B cell (primary cell): ENCODE measurements at regions of chr4 and their contacts with region 1.

Region 1: DNA sequence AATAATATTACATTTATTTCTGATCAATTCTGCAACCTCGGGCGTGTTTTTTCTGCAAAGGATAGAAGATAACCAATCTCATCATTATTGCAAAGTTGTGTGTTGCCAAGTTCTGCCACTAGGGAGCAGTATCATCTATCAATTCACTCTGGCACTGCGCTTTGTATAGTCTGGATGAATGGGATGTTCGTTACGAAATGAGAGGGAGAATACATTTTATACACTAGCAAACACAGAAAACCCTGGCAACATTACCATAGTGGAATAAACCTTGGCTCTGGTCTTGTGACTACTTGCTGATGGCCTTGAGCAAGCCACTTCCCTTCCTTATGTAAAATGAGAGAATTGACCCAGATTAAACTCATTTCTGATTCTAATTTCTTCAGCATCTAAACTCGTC is 97.5 kb upstream of the ZNF518B start:
- DNase-seq: peak; percentile 67
- ATAC-seq: peak; percentile 70
- H3K4me3 ChIP-seq: no peak overlapping the region
- H3K4me3 Mint-ChIP-seq: no peak overlapping the region
- H3K27ac ChIP-seq: no peak overlapping the region
- H3K27ac Mint-ChIP-seq: no peak overlapping the region
- H3K4me1 ChIP-seq: peaks cover 4 to 9% of the 10 kb centered on the region in 2 donors
- H3K4me1 Mint-ChIP-seq: peaks cover 10% of the 10 kb centered on the region
- H3K27me3 ChIP-seq: no peaks in the 10 kb centered on the region
- H3K27me3 Mint-ChIP-seq: no peaks in the 10 kb centered on the region
- CTCF ChIP-seq: peak; percentile 93

Region 2: GRCh38 chr4:10461091-10461849 is 93.4 kb before region 1 on chr4:
- CTCF ChIA-PET with region 1: interaction called, 11 read pairs
- POLR2A ChIA-PET with region 1: no interaction called
- intact Hi-C with region 1: no loop called
- DNase-seq: peak; percentile 91
- ATAC-seq: peak; percentile 82
- H3K4me3 ChIP-seq: peak overlapping the region; percentile 27 to 62 (median 48)
- H3K4me3 Mint-ChIP-seq: peak overlapping the region; percentile 82
- H3K27ac ChIP-seq: no peak overlapping the region
- H3K27ac Mint-ChIP-seq: no peak overlapping the region
- H3K4me1 ChIP-seq: peaks cover 13 to 25% of the 10 kb centered on the region in 2 donors
- H3K4me1 Mint-ChIP-seq: peaks cover 21% of the 10 kb centered on the region
- H3K27me3 ChIP-seq: peaks cover 0 to 40% (median 17%) of the 10 kb centered on the region in 4 experiments
- H3K27me3 Mint-ChIP-seq: peaks cover 48% of the 10 kb centered on the region
- CTCF ChIP-seq: peak; percentile 99

Region 3: DNA sequence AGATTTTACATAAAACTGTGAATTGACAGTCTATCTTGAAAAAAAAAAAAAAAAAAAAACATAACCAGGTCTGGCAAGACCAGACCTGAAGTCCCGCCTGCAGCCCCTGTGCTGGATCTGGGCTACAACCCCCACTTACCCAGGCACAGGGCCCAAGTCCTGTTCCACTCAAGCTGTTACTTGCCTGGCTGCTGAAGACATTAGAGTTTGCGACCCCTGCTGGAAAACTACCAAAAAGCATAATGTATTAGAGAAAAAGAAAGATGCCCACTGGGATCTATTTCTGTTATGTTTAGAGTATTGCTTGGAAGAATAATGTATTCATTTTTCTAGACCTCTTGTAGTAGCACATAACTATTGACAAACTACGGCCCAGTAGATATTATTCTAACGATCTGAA is 869.3 kb after region 1 on chr4:
- CTCF ChIA-PET with region 1: interaction called, 22 read pairs
- POLR2A ChIA-PET with region 1: no interaction called
- intact Hi-C with region 1: loop called (anchors 1 kb)
- DNase-seq: peak; percentile 71
- ATAC-seq: no peak
- H3K4me3 ChIP-seq: no peak overlapping the region
- H3K4me3 Mint-ChIP-seq: no peak overlapping the region
- H3K27ac ChIP-seq: no peak overlapping the region
- H3K27ac Mint-ChIP-seq: no peak overlapping the region
- H3K4me1 ChIP-seq: peaks cover 40 to 42% of the 10 kb centered on the region in 2 donors
- H3K4me1 Mint-ChIP-seq: peaks cover 73% of the 10 kb centered on the region
- H3K27me3 ChIP-seq: no peaks in the 10 kb centered on the region
- H3K27me3 Mint-ChIP-seq: no peaks in the 10 kb centered on the region
- CTCF ChIP-seq: peak; percentile 77

Region 4: DNA sequence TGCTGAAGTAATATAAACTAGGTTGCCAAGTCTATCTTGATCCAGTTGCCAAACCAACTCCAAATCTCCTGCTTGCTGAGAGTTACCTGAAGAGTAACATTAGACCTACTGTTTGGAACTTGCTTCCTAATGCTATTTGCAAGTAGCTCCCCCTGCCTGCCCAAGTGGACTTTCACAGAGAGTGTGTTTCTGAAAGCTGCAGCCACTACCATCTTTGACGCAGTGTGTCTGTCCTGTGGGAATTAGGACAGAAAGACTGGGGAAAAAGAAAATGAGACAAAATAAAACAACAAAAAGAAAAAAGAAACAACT is 1069.0 kb after region 1 on chr4:
- CTCF ChIA-PET with region 1: no interaction called
- POLR2A ChIA-PET with region 1: no interaction called
- intact Hi-C with region 1: loop called (anchors 2 kb)
- DNase-seq: peak; percentile 17
- ATAC-seq: no peak
- H3K4me3 ChIP-seq: no peak overlapping the region
- H3K4me3 Mint-ChIP-seq: no peak overlapping the region
- H3K27ac ChIP-seq: no peak overlapping the region
- H3K27ac Mint-ChIP-seq: no peak overlapping the region
- H3K4me1 ChIP-seq: peaks cover 0 to 4% of the 10 kb centered on the region in 2 donors
- H3K4me1 Mint-ChIP-seq: peaks cover 7% of the 10 kb centered on the region
- H3K27me3 ChIP-seq: no peaks in the 10 kb centered on the region
- H3K27me3 Mint-ChIP-seq: no peaks in the 10 kb centered on the region
- CTCF ChIP-seq: no peak

Region 5: GRCh38 chr4:11954093-11954492 is 1399.4 kb after region 1 on chr4:
- CTCF ChIA-PET with region 1: interaction called, 3 read pairs
- POLR2A ChIA-PET with region 1: no interaction called
- intact Hi-C with region 1: loop called (anchors 10 kb)
- DNase-seq: no peak
- ATAC-seq: no peak
- H3K4me3 ChIP-seq: no peak overlapping the region
- H3K4me3 Mint-ChIP-seq: no peak overlapping the region
- H3K27ac ChIP-seq: no peak overlapping the region
- H3K27ac Mint-ChIP-seq: no peak overlapping the region
- H3K4me1 ChIP-seq: no peaks in the 10 kb centered on the region
- H3K4me1 Mint-ChIP-seq: no peaks in the 10 kb centered on the region
- H3K27me3 ChIP-seq: no peaks in the 10 kb centered on the region
- H3K27me3 Mint-ChIP-seq: no peaks in the 10 kb centered on the region
- CTCF ChIP-seq: no peak